Calu3 (cell line): ENCODE measurements at regions of chr2 and their contacts with region 1.

Region 1: DNA sequence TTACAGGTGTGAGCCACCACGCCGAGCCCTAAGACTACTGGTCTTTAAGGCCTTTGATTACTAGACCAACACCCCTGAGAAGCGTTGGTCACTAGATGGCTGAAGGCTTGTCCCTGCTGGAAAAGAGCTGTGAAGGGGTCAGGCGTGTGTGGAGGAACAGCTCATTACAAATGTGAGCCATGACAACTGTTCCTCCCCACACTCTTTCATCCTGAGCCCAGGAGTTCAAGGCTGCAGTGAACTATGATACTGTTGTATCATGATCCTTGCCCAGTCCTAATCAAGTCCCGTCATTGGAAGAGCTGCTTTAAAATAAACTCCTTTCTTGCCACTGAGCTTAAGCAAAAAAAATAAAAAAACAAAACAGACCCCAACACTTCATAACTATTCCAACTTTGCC is 19.5 kb upstream of the MCFD2 start:
- DNase-seq: no peak
- H3K4me3 Mint-ChIP-seq: no peak overlapping the region
- H3K27ac Mint-ChIP-seq: no peak overlapping the region
- H3K4me1 Mint-ChIP-seq: peaks cover 9% of the 10 kb centered on the region
- H3K27me3 Mint-ChIP-seq: no peaks in the 10 kb centered on the region
- CTCF ChIP-seq: no peak

Region 2: DNA sequence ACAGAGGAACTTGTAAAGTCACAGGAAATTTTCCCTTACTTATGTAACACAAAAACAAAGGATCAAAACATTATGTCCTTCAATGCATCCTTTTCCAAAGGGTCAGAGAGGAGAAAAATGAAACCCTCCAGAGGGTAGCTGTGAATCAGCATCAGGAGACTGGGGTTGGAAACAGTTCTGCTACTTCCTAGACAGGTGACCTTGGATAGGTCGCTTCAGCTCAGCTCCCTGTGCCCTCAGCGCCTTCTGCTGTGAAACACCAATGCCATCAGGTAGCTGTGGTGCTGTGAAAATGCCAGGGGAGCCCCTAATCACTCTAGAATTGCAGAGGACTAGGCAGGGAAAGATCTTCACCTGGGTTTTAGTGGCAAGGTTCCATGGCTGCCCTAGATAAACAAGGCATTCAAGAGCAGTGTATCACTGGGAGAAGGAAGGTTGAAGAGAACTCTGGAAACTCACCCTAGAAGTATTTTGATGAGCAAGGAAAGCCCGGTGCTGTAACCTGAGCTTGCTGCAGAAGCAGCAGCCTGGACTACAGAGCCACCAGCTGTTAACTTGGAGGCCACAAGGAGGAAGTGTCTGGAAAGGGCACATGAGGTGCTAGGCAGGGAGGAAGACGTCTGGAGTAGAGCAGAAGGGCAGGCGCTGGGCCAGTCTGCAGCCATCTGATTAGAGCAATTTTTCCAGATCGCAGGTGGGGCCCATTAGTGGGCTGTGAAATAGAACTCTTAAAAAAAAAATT is 81.3 kb after region 1 on chr2:
- CTCF ChIA-PET with region 1: interaction called, 12 read pairs
- intact Hi-C with region 1: no loop called
- DNase-seq: peak; percentile 81
- H3K4me3 Mint-ChIP-seq: peak overlapping the region; percentile 11
- H3K27ac Mint-ChIP-seq: peak overlapping the region; percentile 51
- H3K4me1 Mint-ChIP-seq: peaks cover 27% of the 10 kb centered on the region
- H3K27me3 Mint-ChIP-seq: no peaks in the 10 kb centered on the region
- CTCF ChIP-seq: no peak